ENCODE measurements at regions of chr11 and their contacts with region 1.

Region 1: DNA sequence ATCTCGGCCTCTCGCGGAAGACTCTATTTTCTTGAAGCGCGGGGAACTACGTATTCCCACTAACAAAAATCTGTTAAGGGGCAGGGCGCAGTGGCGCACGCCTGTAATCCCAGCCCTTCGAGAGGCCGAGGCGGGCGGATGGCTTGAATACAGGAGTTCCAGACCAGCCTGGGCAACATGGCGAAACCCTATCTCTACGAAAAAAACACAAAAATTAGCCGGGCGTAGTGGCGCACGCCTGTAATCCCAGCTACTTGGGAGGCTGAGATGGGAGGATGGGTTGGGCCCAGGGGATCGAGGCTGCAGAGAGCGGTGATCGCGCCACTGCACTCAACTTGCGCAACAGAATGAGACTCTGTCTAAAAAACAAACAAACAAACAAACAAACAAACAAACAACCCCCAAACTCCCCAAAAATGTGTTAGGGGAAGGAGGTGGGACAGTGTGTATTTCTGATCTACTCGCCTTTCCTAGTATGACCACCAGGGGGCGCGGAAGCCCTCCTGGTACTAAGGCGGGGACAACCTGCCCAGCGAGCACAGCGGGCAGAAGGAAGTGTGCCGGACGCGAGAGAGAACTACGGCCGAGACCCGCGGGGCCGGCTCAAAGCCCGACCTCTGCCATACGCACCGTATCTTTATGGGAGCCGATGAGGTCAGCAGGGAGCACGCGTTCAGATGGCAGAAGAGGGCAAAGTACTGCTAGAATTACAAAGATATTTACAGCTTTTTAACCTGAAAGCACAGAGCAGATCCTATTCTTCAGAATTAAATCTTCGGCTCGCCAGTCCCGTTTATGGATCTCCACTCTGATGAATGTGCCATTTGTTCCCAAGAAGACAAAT is 1.3 kb upstream of the STX3 start:
- DNase-seq: peak; percentile 92
- H3K4me3 ChIP-seq: peak overlapping the region; percentile 67 to 92 (median 76)
- H3K27ac ChIP-seq: peak overlapping the region; percentile 86 to 94 (median 91)
- H3K4me1 ChIP-seq: peaks cover 0 to 22% (median 16%) of the 10 kb centered on the region in 4 donors
- H3K27me3 ChIP-seq: no peaks in the 10 kb centered on the region
- CTCF ChIP-seq: peak; percentile 79 to 94 (median 92)
- EP300 ChIP-seq: no peak
- POLR2A ChIP-seq: no peak

Region 2: GRCh38 chr11:58579192-58580129 is 1174.4 kb before region 1 on chr11:
- intact Hi-C with region 1: loop called (anchors 10 kb)
- DNase-seq: peak; percentile 97
- H3K4me3 ChIP-seq: peak overlapping the region; percentile 89 to 100 (median 99)
- H3K27ac ChIP-seq: peak overlapping the region; percentile 98 to 100 (median 100)
- H3K4me1 ChIP-seq: peaks cover 0 to 73% (median 62%) of the 10 kb centered on the region in 4 donors
- H3K27me3 ChIP-seq: no peaks in the 10 kb centered on the region
- CTCF ChIP-seq: peak; percentile 81 to 96 (median 91)
- EP300 ChIP-seq: peak in 2 of 4 donors; percentile 24 to 59
- POLR2A ChIP-seq: peak; percentile 64 to 68

Region 3: DNA sequence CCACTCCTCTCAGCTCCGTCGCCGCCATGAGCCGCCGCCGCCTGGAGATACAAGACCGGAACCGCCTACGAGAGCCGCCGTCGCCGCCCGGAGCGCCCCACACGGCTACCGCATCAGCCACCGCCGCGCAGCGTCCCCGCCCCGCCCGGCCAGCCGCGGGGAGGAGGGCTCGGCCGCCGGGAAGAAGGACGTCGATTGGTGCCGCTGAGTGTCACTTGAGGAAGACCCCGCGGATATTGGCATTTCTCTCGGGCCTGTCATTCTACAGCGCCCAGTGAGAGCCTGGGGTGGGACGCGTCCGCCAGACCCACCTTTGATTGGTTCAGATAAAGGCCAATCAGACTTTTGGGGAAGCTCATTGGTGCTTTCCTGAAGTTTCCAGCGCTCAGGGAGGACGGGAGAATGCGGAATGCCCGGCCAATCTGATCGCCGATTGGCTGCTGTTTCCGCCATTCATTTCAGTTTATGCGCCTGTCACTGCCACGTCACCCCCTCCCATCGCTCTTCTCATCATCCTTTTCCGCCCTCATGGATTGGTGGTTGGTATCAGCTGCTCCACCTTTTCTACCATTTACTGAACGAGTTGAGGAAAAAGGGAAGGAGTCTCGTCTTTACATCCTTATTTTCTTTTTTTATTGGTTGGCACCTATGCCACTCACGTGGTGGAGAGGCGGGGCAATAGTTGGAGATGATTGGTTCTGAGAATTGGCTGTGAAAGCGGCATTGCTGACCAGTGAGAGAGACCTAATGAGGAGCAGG is 138.1 kb before region 1 on chr11 and contains the start of gene OSBP:
- intact Hi-C with region 1: loop called (anchors 10 kb)
- DNase-seq: peak; percentile 100
- H3K4me3 ChIP-seq: peak within 1 kb of the TSS; percentile 75 to 88 (median 86)
- H3K27ac ChIP-seq: peak within 1 kb of the TSS; percentile 92 to 97 (median 94)
- H3K4me1 ChIP-seq: peaks cover 0 to 43% (median 33%) of the 10 kb centered on the region in 4 donors
- H3K27me3 ChIP-seq: no peaks in the 10 kb centered on the region
- CTCF ChIP-seq: no peak
- EP300 ChIP-seq: no peak
- POLR2A ChIP-seq: peak in 1 of 2 donors; percentile 61
- total RNA-seq, gene OSBP: 27.5 to 41.5 (median 30.0) TPM

Region 4: DNA sequence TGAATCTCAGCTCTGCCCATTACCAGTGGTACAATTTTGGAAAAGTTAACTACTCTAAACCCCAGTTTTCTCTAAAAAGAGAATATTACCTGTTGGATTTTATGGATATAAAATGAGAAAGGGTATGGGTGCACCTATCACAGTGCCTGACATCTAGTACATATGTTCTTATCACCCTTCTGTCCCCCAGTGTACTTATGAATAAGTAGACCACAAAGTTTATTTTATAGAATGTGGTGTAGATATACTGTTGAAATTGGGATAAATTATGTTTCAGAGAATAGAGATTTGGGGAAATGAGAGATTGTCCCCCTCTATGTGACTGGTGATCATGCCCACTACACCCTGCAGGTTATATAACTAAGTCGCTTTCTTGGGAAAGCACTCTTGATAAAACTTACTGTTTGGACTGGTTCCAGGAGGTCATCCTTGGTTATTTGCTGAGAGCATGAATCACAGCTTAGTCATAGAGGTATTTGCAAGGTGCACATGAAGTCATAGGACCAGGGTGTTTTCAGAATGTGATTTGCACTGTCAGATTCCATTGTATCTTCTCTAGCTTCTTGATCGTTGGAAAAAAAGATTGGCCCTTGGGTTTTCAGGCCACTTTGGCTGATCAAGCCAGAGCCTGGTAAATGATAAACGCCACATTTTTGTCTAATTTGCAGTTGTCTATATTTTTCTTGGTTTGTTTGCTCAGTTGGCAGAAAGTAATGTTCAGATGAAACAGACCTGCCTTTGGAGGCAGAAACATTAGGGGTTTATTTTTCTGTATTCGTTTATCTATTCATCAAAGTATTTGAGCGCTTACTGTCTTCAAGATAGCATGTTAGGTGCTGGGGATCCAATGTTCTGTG is 22.6 kb after region 1 on chr11:
- intact Hi-C with region 1: no loop called
- DNase-seq: no peak
- H3K4me3 ChIP-seq: no peak overlapping the region
- H3K27ac ChIP-seq: no peak overlapping the region
- H3K4me1 ChIP-seq: no peaks in the 10 kb centered on the region
- H3K27me3 ChIP-seq: no peaks in the 10 kb centered on the region
- CTCF ChIP-seq: no peak
- EP300 ChIP-seq: no peak
- POLR2A ChIP-seq: no peak

Region 5: DNA sequence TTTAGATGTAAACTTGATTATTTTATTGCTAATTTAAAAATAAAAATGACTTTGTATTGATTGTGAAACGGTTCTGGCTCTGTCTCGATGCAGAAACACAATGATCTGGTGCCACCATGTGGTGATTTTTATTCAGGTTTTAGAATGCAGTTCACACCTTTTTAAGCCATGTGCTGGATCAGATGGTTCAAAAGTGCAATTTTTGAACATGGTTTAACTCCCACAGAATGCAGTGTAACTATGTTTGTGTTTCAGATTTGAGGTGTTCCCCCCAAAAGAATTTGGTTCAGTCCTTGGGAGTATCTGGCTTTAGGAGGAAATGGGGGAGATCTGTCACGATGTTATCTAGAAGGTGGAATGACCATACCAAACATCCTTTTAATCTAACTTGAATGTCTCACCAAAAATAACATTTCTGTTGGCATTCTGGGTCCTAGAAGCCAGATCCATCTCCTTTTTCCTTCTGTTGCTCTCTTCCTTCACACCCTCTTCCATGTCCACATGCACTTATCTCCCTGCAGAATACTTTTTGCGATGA is 48.8 kb after region 1 on chr11:
- intact Hi-C with region 1: loop called (anchors 1 kb)
- DNase-seq: no peak
- H3K4me3 ChIP-seq: no peak overlapping the region
- H3K27ac ChIP-seq: peak overlapping the region in 1 of 4 donors; percentile 35
- H3K4me1 ChIP-seq: no peaks in the 10 kb centered on the region
- H3K27me3 ChIP-seq: no peaks in the 10 kb centered on the region
- CTCF ChIP-seq: peak; percentile 25 to 72 (median 54)
- EP300 ChIP-seq: no peak
- POLR2A ChIP-seq: no peak

Region 6: GRCh38 chr11:59918987-59919589 is 165.2 kb after region 1 on chr11:
- intact Hi-C with region 1: loop called (anchors 5 kb)
- DNase-seq: no peak
- H3K4me3 ChIP-seq: no peak overlapping the region
- H3K27ac ChIP-seq: no peak overlapping the region
- H3K4me1 ChIP-seq: no peaks in the 10 kb centered on the region
- H3K27me3 ChIP-seq: no peaks in the 10 kb centered on the region
- CTCF ChIP-seq: peak in 2 of 4 experiments; percentile 15
- EP300 ChIP-seq: no peak
- POLR2A ChIP-seq: no peak

Region 7: GRCh38 chr11:59938718-59939117 is 184.8 kb after region 1 on chr11:
- intact Hi-C with region 1: no loop called
- DNase-seq: no peak
- H3K4me3 ChIP-seq: no peak overlapping the region
- H3K27ac ChIP-seq: no peak overlapping the region
- H3K4me1 ChIP-seq: no peaks in the 10 kb centered on the region
- H3K27me3 ChIP-seq: no peaks in the 10 kb centered on the region
- CTCF ChIP-seq: no peak
- EP300 ChIP-seq: no peak
- POLR2A ChIP-seq: no peak

Region 8: GRCh38 chr11:60378354-60378753 is 624.5 kb after region 1 on chr11 and contains the start of gene MS4A7:
- intact Hi-C with region 1: no loop called
- DNase-seq: peak; percentile 72
- H3K4me3 ChIP-seq: peak within 1 kb of the TSS in 3 of 4 donors; percentile 5 to 34 (median 21)
- H3K27ac ChIP-seq: peak within 1 kb of the TSS; percentile 4 to 55 (median 36)
- H3K4me1 ChIP-seq: no peaks in the 10 kb centered on the region
- H3K27me3 ChIP-seq: no peaks in the 10 kb centered on the region
- CTCF ChIP-seq: no peak
- EP300 ChIP-seq: no peak
- POLR2A ChIP-seq: peak; percentile 19 to 42
- total RNA-seq, gene MS4A7: 26.1 to 51.0 (median 32.2) TPM

Measured in sigmoid colon (tissue), 7 donors.